Panc1 (cell line): ENCODE measurements at regions of chr21 and their contacts with region 1.

Region 1: DNA sequence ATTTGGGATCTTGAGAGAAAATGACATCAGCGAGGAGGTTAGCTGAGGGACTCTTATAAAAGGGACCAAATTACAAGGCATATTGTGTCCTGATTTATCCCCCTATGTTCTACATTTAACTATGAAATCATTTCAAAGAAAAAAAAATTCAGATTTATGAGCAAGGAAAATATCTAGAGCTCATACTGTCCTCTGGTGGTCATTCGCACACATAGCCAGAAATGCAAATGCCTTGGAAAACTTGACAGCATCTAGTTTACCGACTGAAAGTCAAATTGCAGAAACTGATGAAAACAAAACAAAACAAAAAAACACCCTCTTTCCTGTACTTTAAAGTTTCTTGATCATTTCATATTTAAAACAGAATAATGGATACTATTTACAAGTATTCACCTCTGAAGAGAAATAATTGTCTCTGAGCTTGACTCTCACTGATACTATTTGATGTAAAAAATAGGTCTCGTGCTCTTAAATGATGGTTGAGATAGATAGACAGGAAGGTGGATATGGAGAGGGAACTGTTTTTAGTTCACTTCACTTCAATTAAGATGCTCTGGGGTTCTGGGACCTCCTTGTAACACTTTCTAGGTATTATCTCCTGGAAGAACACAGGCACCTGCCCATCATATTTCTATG is 253.8 kb downstream of the PCP4 start:
- DNase-seq: no peak
- ATAC-seq: no peak
- H3K4me3 ChIP-seq: no peak overlapping the region
- H3K27ac ChIP-seq: no peak overlapping the region
- H3K4me1 ChIP-seq: no peaks in the 10 kb centered on the region
- H3K27me3 ChIP-seq: no peaks in the 10 kb centered on the region; the same call in 1 of the 2 replicates
- CTCF ChIP-seq: peak; percentile 81; the same call in 1 of the 2 replicates

Region 2: GRCh38 chr21:39788383-39788782 is 332.7 kb before region 1 on chr21:
- CTCF ChIA-PET with region 1: interaction called, 9 read pairs
- POLR2A ChIA-PET with region 1: no interaction called
- in situ Hi-C with region 1: no loop called
- intact Hi-C with region 1: loop called (anchors 1 kb)
- DNase-seq: peak; percentile 22
- ATAC-seq: peak; percentile 98
- H3K4me3 ChIP-seq: no peak overlapping the region
- H3K27ac ChIP-seq: no peak overlapping the region
- H3K4me1 ChIP-seq: no peaks in the 10 kb centered on the region
- H3K27me3 ChIP-seq: no peaks in the 10 kb centered on the region
- CTCF ChIP-seq: peak; percentile 87

Region 3: GRCh38 chr21:39867198-39867650 is 253.8 kb before region 1 on chr21 and contains the start of gene PCP4:
- CTCF ChIA-PET with region 1: no interaction called
- POLR2A ChIA-PET with region 1: no interaction called
- in situ Hi-C with region 1: no loop called
- intact Hi-C with region 1: loop called (anchors 2 kb)
- DNase-seq: no peak
- ATAC-seq: peak; percentile 79; the same call in 1 of the 2 replicates
- H3K4me3 ChIP-seq: no peak within 1 kb of the TSS
- H3K27ac ChIP-seq: no peak within 1 kb of the TSS
- H3K4me1 ChIP-seq: no peaks in the 10 kb centered on the region
- H3K27me3 ChIP-seq: no peaks in the 10 kb centered on the region
- CTCF ChIP-seq: peak; percentile 88
- total RNA-seq, gene PCP4: not detected